ENCODE measurements at regions of chr6 and their contacts with region 1.

Region 1: DNA sequence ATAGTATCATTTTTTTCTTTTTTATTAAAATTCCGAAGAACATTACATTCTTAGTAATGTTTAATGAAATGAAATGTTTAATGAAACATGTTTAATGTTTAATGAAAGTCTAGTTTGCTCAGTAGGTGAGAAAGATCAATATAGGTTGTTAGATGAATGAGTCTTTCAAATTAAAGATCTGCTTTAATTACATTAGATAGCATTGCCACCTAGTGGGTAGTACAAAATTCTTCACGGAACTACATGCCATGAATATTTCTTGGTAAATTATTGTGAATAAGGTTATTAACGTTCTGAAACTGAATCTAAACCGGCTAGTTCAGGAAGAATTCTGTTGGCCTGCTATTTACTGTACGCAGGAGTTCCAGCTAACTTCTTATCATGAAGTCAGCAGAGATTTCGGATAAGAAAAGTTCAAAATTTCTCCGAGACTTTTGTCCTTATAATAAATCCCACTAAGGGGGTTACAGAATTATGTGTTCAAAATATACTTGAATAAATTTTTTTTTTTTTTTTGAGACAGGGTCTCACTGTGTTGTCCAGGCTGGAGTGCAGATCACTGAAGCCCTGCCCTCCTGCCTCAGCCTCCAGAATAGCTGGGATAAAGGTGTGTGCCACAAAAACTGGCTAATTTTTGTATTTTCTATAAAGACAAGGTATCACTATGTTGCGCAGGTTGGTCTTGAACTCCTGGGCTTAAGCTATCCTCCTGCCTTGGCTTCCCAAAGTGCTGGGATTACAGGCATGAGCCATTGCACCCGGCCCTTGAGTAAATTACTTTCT is 7.9 kb upstream of the GMNN start:
- DNase-seq: peak; percentile 20
- H3K4me3 ChIP-seq: no peak overlapping the region
- H3K27ac ChIP-seq: no peak overlapping the region
- H3K4me1 ChIP-seq: peaks cover 4% of the 10 kb centered on the region
- H3K27me3 ChIP-seq: no peaks in the 10 kb centered on the region
- CTCF ChIP-seq: peak; percentile 39 to 49

Region 2: GRCh38 chr6:24431045-24431451 is 335.8 kb before region 1 on chr6:
- CTCF ChIA-PET with region 1: no interaction called
- dilution Hi-C with region 1: no loop called
- in situ Hi-C with region 1: no loop called
- intact Hi-C with region 1: loop called (anchors 2 kb)
- DNase-seq: peak; percentile 20
- H3K4me3 ChIP-seq: no peak overlapping the region
- H3K27ac ChIP-seq: no peak overlapping the region
- H3K4me1 ChIP-seq: no peaks in the 10 kb centered on the region
- H3K27me3 ChIP-seq: no peaks in the 10 kb centered on the region
- CTCF ChIP-seq: peak; percentile 56 to 66

Region 3: DNA sequence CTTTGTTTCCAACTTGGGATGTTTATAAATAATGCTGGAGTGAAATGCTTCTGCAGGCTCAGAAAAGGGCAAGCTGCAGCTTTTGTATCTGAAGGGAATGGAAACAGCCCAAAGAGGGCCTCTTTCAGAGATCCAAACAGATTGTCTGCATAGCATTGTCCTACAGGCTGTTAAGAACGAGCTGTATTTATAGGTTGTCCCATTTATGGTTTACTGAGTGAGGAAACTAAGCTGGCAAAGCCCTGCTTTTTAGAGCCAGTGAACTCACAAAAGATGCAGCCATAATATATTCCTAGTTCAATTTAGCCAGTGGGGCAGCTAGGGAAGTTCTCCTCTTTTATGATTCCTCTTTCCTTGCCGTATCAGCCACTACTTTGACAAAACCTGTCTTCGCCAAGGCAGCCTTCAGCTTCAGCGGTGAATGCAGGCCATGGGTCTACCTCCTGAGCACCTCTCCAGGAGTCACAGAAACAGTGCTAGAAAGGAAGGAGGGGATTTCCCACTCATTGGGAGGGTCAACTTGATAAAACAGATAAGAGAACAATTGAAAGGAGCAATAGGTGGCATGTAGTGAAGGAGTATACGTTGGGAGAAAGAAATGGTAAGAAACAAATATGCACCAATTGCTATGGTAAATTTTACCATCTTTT is 135.9 kb before region 1 on chr6:
- CTCF ChIA-PET with region 1: no interaction called
- dilution Hi-C with region 1: no loop called
- in situ Hi-C with region 1: no loop called
- intact Hi-C with region 1: no loop called
- DNase-seq: no peak
- H3K4me3 ChIP-seq: no peak overlapping the region
- H3K27ac ChIP-seq: no peak overlapping the region
- H3K4me1 ChIP-seq: no peaks in the 10 kb centered on the region
- H3K27me3 ChIP-seq: no peaks in the 10 kb centered on the region
- CTCF ChIP-seq: no peak

Region 4: GRCh38 chr6:24699521-24700359 is 67.1 kb before region 1 on chr6:
- CTCF ChIA-PET with region 1: no interaction called
- dilution Hi-C with region 1: no loop called
- in situ Hi-C with region 1: no loop called
- intact Hi-C with region 1: loop called (anchors 5 kb)
- DNase-seq: no peak
- H3K4me3 ChIP-seq: no peak overlapping the region
- H3K27ac ChIP-seq: no peak overlapping the region
- H3K4me1 ChIP-seq: no peaks in the 10 kb centered on the region
- H3K27me3 ChIP-seq: no peaks in the 10 kb centered on the region
- CTCF ChIP-seq: no peak

Measured in mammary epithelial cell (primary cell).